ENCODE measurements at regions of chr14 and their contacts with region 1.

Region 1: GRCh38 chr14:100850841-100851585 is 25.1 kb downstream of the MEG3 start:
- DNase-seq: peak; percentile 76
- H3K4me3 ChIP-seq: no peak overlapping the region
- H3K27ac ChIP-seq: no peak overlapping the region
- H3K4me1 ChIP-seq: peaks cover 17% of the 10 kb centered on the region
- H3K27me3 ChIP-seq: no peaks in the 10 kb centered on the region
- CTCF ChIP-seq: peak; percentile 90

Region 2: GRCh38 chr14:100890061-100890850 is 39.2 kb after region 1 on chr14:
- CTCF ChIA-PET with region 1: no interaction called
- POLR2A ChIA-PET with region 1: no interaction called
- intact Hi-C with region 1: loop called (anchors 5 kb)
- DNase-seq: no peak
- H3K4me3 ChIP-seq: no peak overlapping the region
- H3K27ac ChIP-seq: peak overlapping the region; percentile 87
- H3K4me1 ChIP-seq: peaks cover 49% of the 10 kb centered on the region
- H3K27me3 ChIP-seq: no peaks in the 10 kb centered on the region
- CTCF ChIP-seq: no peak

Region 3: DNA sequence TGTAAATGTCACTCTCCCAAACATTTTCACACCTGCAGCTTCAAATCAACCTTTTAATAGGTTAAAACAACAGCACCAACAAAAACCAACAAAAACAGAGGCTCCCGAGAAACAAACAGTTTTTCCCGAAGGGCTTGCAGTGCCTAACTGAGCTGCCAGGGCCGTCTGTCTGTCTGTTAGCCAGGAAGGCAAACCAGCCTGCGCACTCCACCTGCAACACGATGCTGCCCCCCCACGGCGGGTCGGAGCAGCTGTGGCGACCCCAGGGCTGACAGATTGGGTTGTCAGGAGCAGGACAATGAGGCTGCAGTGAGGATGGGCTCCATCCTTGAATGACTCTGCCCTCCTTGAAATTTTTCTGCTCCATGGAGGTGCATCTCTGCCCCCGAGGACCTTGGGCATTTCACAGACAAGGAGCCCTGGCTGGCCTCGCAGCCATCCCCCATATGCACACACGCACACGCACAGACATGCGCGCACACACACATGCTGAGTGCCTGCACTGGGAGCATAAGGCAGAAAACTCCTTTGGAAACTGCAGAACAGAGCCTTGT is 49.9 kb after region 1 on chr14:
- CTCF ChIA-PET with region 1: interaction called, 6 read pairs
- POLR2A ChIA-PET with region 1: no interaction called
- intact Hi-C with region 1: loop called (anchors 5 kb)
- DNase-seq: peak; percentile 33
- H3K4me3 ChIP-seq: no peak overlapping the region
- H3K27ac ChIP-seq: no peak overlapping the region
- H3K4me1 ChIP-seq: peaks cover 39% of the 10 kb centered on the region
- H3K27me3 ChIP-seq: peaks cover 13% of the 10 kb centered on the region
- CTCF ChIP-seq: peak; percentile 56

Region 4: DNA sequence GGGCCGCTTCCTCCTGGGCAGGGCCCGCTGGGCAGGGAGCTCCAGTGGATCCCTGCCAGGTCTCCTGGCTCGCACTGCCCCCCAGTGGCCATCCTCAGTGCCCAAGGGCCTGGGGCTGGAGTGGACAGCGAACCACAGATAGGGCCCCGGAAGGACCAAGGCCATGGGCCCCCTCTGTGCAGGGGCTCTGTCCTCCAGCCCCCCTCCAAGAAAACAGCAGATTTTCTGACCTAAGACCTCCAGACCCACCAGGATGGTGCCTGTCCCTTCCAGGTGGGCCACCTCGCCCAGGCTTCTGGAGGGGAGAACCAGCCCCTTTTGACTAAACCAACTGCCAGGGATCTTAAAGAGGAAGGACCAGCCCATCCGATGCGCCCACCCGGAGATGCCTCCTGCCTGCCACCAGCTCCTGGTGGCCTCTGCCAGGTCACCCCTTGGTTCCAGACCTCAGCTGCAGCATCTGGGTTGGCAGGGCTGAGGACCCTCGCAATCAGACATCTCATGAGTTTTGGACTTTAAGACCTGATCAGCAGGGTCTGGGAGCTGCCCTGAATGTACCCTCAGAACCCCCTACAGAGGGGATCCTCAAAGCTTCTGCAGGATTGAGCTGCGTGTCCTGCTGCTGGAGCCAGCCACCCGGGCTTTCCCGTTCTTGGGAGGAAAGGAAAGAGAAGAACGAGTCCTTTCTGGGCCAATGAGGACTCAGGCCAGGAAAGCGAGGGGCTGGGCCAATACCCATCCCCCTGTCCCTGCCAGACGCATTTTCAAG is 384.5 kb after region 1 on chr14:
- CTCF ChIA-PET with region 1: interaction called, 5 read pairs
- POLR2A ChIA-PET with region 1: no interaction called
- intact Hi-C with region 1: loop called (anchors 5 kb)
- DNase-seq: peak; percentile 55
- H3K4me3 ChIP-seq: no peak overlapping the region
- H3K27ac ChIP-seq: no peak overlapping the region
- H3K4me1 ChIP-seq: no peaks in the 10 kb centered on the region
- H3K27me3 ChIP-seq: peaks cover 2% of the 10 kb centered on the region
- CTCF ChIP-seq: peak; percentile 74

Region 5: GRCh38 chr14:101628471-101628966 is 777.5 kb after region 1 on chr14:
- CTCF ChIA-PET with region 1: no interaction called
- POLR2A ChIA-PET with region 1: no interaction called
- intact Hi-C with region 1: loop called (anchors 2 kb)
- DNase-seq: peak; percentile 83
- H3K4me3 ChIP-seq: peak overlapping the region; percentile 30
- H3K27ac ChIP-seq: no peak overlapping the region
- H3K4me1 ChIP-seq: peaks cover 6% of the 10 kb centered on the region
- H3K27me3 ChIP-seq: peaks cover 3% of the 10 kb centered on the region
- CTCF ChIP-seq: peak; percentile 95

Measured in A673 (cell line).